Heart right ventricle (tissue), 16 donors: ENCODE measurements at regions of chr14 and their contacts with region 1.

Region 1: DNA sequence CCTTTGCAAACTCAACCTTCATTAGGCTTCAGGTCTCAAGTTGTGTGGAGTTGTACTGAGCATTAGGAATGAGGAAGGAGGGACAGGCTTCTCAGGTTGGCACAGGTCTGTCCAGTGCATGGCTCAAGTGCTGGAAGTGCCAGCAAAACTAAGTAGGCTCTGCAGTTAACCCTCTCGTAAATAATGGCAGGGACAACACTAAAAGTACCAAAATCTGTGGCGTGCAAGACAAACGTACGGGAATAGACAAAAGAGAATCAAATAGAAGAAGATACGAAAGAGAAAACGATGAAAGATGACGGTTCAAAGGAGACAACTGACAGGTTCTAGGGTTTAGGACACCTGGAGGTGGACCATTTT is 612 bp downstream of the TRAPPC6B start:
- DNase-seq: no peak
- ATAC-seq: peak in 6 of 8 donors; percentile 38 to 60 (median 52)
- H3K4me3 ChIP-seq: peak overlapping the region; percentile 64 to 98 (median 84)
- H3K27ac ChIP-seq: peak overlapping the region; percentile 86 to 99 (median 96)
- H3K4me1 ChIP-seq: peaks cover 0 to 46% (median 35%) of the 10 kb centered on the region in 9 donors
- H3K27me3 ChIP-seq: no peaks in the 10 kb centered on the region
- CTCF ChIP-seq: no peak

Region 2: GRCh38 chr14:39122330-39123138 is 47.0 kb before region 1 on chr14:
- intact Hi-C with region 1: loop called in 1 of 10 experiments (anchors 5 kb)
- DNase-seq: no peak
- ATAC-seq: no peak
- H3K4me3 ChIP-seq: no peak overlapping the region
- H3K27ac ChIP-seq: no peak overlapping the region
- H3K4me1 ChIP-seq: no peaks in the 10 kb centered on the region
- H3K27me3 ChIP-seq: no peaks in the 10 kb centered on the region
- CTCF ChIP-seq: no peak

Region 3: DNA sequence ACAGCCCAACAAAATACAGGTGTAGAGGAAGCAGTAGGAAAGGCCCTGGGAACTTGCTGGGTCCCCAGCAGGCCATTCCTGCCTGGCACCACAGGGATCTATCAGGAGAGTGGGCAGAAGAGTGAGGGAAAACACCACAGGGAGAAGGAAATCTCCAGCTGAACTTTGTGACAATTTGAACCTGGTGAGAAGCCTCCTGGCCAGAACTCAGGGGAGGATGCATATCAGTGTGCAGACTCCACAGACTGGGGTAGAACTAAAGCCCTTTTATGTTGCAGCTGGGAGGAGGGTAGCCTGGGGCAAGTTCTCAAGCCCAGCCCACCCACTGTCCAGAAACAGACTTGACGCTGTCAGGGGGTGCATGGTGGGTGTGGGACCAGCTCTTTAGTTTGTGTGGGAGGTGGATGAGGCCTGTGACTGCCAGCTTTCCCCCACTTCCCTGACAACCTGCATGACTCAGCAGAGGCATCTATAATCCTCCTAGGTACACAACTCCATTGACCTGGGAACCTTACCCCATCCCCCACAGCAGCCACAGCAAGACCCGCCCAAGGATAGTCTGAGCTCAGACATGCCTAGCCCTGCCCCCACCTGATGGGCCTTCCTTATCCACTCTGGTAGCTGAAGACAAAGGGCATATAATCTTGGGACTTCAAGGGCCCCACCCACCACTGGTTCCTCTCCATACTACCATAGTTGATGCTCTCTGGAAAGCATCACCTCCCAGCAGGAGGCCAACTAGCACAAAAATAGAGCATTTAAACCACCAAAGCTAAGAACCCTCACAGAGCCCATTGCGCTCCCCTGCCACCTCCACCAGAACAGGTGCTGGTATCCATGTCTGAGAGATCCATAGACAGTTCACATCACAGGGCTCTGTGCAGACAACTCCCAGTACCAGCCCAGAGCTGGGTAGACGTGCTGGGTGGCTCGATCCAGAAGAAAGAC is 34.4 kb after region 1 on chr14:
- intact Hi-C with region 1: no loop called
- DNase-seq: no peak
- ATAC-seq: no peak
- H3K4me3 ChIP-seq: no peak overlapping the region
- H3K27ac ChIP-seq: no peak overlapping the region
- H3K4me1 ChIP-seq: no peaks in the 10 kb centered on the region
- H3K27me3 ChIP-seq: no peaks in the 10 kb centered on the region
- CTCF ChIP-seq: no peak

Region 4: DNA sequence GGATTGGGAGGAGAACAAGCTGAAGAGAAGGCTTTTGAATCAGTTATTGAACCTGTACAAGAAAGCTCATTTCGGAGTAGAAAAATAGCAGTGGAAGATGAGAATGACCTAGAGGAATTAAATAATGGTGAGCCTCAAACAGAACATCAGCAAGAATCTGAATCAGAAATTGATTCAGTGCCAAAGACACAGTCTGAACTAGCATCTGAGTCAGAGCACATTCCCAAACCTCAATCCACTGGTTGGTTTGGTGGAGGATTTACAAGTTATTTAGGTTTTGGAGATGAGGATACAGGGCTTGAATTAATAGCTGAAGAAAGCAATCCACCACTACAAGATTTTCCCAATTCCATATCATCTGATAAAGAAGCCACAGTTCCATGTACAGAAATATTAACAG is 77.7 kb after region 1 on chr14:
- intact Hi-C with region 1: no loop called
- DNase-seq: no peak
- ATAC-seq: no peak
- H3K4me3 ChIP-seq: no peak overlapping the region
- H3K27ac ChIP-seq: no peak overlapping the region
- H3K4me1 ChIP-seq: no peaks in the 10 kb centered on the region
- H3K27me3 ChIP-seq: peaks cover 0 to 9% (median 0%) of the 10 kb centered on the region in 7 donors
- CTCF ChIP-seq: no peak